Adrenal gland (tissue), 19 donors: ENCODE measurements at regions of chr6 and their contacts with region 1.

Region 1: GRCh38 chr6:159252955-159253508 is 83.8 kb downstream of the FNDC1 start:
- DNase-seq: peak in 4 of 7 donors; percentile 24 to 56 (median 33)
- H3K4me3 ChIP-seq: no peak overlapping the region
- H3K27ac ChIP-seq: no peak overlapping the region
- H3K4me1 ChIP-seq: no peaks in the 10 kb centered on the region
- H3K27me3 ChIP-seq: no peaks in the 10 kb centered on the region
- CTCF ChIP-seq: peak; percentile 40 to 62 (median 46)
- POLR2A ChIP-seq: no peak

Region 2: DNA sequence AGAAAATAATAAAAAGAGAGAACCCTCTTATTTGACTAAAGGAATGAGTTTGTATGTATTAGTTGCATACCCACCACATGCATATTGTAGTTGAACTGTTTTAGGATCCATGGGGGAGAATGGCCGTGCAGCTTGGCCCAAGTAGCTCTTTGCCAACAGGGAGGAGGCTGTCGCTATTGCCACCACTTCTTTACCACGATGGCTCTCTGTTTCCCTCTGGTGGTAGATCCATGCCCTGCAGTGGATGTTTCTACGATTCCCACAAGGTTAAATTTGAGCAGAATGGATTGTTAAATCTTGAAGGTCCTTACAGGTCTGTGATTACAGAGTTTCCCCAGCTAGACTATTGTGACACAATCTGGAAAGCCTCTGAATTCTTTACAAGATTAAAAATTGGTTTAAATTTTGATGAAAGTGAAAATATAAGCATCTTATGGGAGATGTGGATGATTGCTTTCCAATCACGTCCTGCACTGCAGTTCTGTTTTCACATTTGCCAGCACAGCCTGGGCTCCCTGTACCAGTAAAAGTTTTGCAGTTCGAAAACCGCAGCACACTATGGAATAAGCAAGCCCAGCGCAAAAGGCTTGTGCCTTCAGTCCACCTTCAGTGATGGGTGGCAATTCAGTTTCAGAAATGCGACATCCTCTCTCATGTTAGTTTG is 118.2 kb before region 1 on chr6:
- intact Hi-C with region 1: no loop called
- DNase-seq: peak; percentile 75 to 93 (median 83)
- H3K4me3 ChIP-seq: no peak overlapping the region
- H3K27ac ChIP-seq: no peak overlapping the region
- H3K4me1 ChIP-seq: no peaks in the 10 kb centered on the region
- H3K27me3 ChIP-seq: no peaks in the 10 kb centered on the region
- CTCF ChIP-seq: peak; percentile 93 to 97 (median 96)
- POLR2A ChIP-seq: no peak

Region 3: GRCh38 chr6:159654483-159655098 is 401.6 kb after region 1 on chr6:
- intact Hi-C with region 1: loop called in 1 of 2 experiments (anchors 10 kb)
- DNase-seq: no peak
- H3K4me3 ChIP-seq: no peak overlapping the region
- H3K27ac ChIP-seq: no peak overlapping the region
- H3K4me1 ChIP-seq: no peaks in the 10 kb centered on the region
- H3K27me3 ChIP-seq: no peaks in the 10 kb centered on the region
- CTCF ChIP-seq: peak; percentile 52 to 73 (median 72)
- POLR2A ChIP-seq: no peak